ENCODE measurements at regions of chr19 and their contacts with region 1.

Region 1: DNA sequence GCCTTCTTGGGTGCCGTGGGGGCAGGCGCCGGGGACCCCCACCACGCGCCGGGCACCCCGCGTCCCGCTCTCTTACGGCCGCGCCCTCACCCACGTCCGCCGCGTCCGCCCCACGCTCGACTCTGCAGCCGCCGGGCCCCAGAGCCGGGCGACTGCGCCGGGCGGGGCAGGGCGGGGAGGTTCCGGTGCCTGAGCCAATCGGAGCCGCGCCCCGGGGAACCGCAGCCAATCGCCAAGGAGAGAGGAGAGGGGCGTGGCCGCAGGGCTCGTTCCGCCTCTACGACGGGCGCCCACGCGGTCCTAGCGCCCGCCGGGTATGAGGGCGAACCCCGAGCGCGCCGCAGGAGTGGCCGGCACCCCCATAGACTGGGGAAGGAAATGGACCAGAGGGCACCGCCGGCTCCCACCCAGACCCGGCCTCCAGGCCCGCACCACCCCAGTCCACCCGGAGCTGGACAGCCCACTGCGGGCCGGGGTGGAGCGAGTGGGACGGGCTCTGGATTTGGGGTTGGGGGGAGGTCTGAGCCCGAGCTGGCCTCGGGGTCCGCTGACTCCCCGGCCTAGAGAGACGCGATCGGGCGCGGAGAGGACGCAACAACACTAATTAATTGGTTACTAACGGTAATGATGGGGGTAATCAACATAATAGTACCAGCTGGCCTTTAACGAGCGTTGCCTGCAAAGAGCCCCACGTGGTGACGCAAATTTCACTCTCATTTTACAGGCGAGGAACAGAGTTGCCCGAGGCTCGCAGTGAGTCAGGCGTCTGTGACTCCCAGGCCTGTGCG is at the start of gene MFSD12:
- DNase-seq: peak; percentile 96
- H3K4me3 Mint-ChIP-seq: peak within 1 kb of the TSS; percentile 87
- H3K27ac Mint-ChIP-seq: peak within 1 kb of the TSS; percentile 76
- H3K4me1 Mint-ChIP-seq: peaks cover 36% of the 10 kb centered on the region
- H3K27me3 Mint-ChIP-seq: no peaks in the 10 kb centered on the region
- total RNA-seq, gene MFSD12: 50.6 to 54.2 TPM

Region 2: GRCh38 chr19:3429581-3430080 is 128.0 kb before region 1 on chr19:
- CTCF ChIA-PET with region 1: no interaction called
- POLR2A ChIA-PET with region 1: no interaction called
- intact Hi-C with region 1: no loop called
- DNase-seq: peak; percentile 85
- H3K4me3 Mint-ChIP-seq: no peak overlapping the region
- H3K27ac Mint-ChIP-seq: no peak overlapping the region
- H3K4me1 Mint-ChIP-seq: peaks cover 7% of the 10 kb centered on the region
- H3K27me3 Mint-ChIP-seq: no peaks in the 10 kb centered on the region

Region 3: DNA sequence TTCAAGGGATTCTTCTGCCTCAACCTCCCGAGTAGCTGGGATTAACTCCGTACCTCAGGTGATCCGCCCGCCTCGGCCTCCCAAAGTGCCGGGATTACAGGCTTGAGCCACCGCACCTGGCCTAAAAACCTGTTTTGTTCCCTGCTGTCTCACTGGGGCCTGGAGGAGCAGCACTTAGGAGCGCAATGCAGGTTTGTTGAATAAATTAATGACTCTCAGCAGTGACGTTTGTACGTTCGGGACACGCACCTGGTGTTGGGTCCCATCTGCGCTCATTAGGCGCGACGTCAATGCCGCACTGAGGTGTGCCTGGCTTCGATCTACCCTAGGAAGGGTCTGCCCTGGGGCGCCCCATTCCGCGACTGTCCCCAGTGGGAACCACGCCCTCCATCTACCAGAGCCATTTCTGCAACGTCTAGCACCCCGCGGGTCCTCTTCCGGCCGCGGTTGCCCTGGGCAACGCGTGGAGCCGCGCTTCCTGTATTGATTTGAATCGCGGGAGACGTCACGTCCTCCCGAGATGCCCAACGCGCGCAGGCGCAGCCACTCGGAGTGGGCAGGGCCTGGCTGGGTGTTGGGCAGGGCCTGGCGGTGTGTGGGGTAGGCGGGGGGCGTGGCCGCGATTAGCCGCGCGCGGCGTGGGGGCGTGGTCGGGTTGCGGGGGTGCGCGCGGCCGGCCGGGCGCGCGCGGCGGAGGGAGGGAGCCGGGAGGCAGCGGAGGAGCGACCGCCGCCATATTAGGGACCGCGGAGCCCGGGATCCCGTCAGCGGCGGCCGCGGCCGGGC is 51.9 kb before region 1 on chr19 and contains the start of gene FZR1:
- CTCF ChIA-PET with region 1: interaction called, 4 read pairs
- POLR2A ChIA-PET with region 1: interaction called, 6 read pairs
- intact Hi-C with region 1: loop called (anchors 2 kb)
- DNase-seq: peak; percentile 100
- H3K4me3 Mint-ChIP-seq: peak within 1 kb of the TSS; percentile 93
- H3K27ac Mint-ChIP-seq: peak within 1 kb of the TSS; percentile 93
- H3K4me1 Mint-ChIP-seq: peaks cover 43% of the 10 kb centered on the region
- H3K27me3 Mint-ChIP-seq: no peaks in the 10 kb centered on the region
- total RNA-seq, gene FZR1: 43.5 to 46.9 TPM

Region 4: GRCh38 chr19:3544742-3545668 is 12.7 kb before region 1 on chr19:
- CTCF ChIA-PET with region 1: interaction called, 39 read pairs
- POLR2A ChIA-PET with region 1: interaction called, 9 read pairs
- intact Hi-C with region 1: no loop called
- DNase-seq: peak; percentile 87
- H3K4me3 Mint-ChIP-seq: no peak overlapping the region
- H3K27ac Mint-ChIP-seq: peak overlapping the region; percentile 56
- H3K4me1 Mint-ChIP-seq: peaks cover 6% of the 10 kb centered on the region
- H3K27me3 Mint-ChIP-seq: no peaks in the 10 kb centered on the region

Region 5: GRCh38 chr19:3572132-3572854 is 14.6 kb after region 1 on chr19:
- CTCF ChIA-PET with region 1: interaction called, 5 read pairs
- POLR2A ChIA-PET with region 1: interaction called, 3 read pairs
- intact Hi-C with region 1: loop called (anchors 1 kb)
- DNase-seq: peak; percentile 100
- H3K4me3 Mint-ChIP-seq: peak overlapping the region; percentile 66
- H3K27ac Mint-ChIP-seq: peak overlapping the region; percentile 42
- H3K4me1 Mint-ChIP-seq: peaks cover 10% of the 10 kb centered on the region
- H3K27me3 Mint-ChIP-seq: no peaks in the 10 kb centered on the region

Region 6: DNA sequence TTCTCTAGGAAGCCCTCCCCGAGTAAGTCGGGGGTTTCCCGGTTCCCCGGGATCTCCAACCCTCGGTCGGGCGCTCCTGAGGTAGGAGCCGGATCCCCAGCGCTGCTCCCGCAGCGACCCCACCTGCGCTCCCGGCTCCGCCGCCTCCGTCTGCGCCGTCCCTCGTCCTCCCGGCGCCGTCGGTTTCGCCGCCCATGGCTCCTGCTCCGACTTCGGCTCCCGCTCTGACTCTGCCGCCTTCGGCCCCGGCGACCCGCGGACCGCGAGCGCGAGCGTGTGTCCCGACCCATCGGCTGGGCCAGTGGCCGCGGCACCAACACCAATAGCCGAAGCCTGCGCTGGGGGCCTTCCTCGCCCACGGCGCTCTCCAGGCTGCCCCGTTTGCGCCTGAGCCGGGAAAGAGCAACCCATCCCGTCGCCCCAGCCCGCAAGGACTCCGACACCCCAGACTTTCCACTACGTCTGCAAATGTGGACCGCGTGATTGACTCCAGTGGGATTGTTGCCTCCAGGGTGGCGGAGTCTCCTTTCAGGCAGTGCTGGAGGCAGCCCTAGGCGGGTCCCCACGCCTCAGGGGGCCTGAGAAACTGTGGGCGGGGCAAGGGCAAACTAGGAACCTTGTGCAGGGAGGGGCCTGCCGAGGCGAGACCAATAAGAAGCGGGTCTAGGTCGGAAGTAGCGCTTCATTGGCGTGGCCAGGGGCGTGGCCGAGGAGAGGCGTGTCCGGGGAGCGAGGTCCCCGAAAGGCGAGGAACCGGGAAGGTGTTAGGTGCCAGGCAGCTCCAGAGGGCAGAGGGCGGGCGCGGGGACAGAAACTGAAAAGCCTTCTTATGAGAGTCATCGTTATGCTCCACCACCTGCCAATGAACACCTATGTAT is 69.1 kb after region 1 on chr19 and contains the start of gene CACTIN:
- CTCF ChIA-PET with region 1: no interaction called
- POLR2A ChIA-PET with region 1: no interaction called
- intact Hi-C with region 1: loop called (anchors 5 kb)
- DNase-seq: peak; percentile 99
- H3K4me3 Mint-ChIP-seq: peak within 1 kb of the TSS; percentile 88
- H3K27ac Mint-ChIP-seq: peak within 1 kb of the TSS; percentile 98
- H3K4me1 Mint-ChIP-seq: peaks cover 24% of the 10 kb centered on the region
- H3K27me3 Mint-ChIP-seq: no peaks in the 10 kb centered on the region
- total RNA-seq, gene CACTIN: 25.2 to 27.2 TPM

Region 7: GRCh38 chr19:3880471-3881271 is 323.0 kb after region 1 on chr19 and contains the start of gene ATCAY:
- CTCF ChIA-PET with region 1: no interaction called
- POLR2A ChIA-PET with region 1: no interaction called
- intact Hi-C with region 1: no loop called
- DNase-seq: no peak
- H3K4me3 Mint-ChIP-seq: no peak within 1 kb of the TSS
- H3K27ac Mint-ChIP-seq: no peak within 1 kb of the TSS
- H3K4me1 Mint-ChIP-seq: peaks cover 13% of the 10 kb centered on the region
- H3K27me3 Mint-ChIP-seq: peaks cover 31% of the 10 kb centered on the region
- total RNA-seq, gene ATCAY: not detected